ENCODE measurements at regions of chr7 and their contacts with region 1.

Region 1: DNA sequence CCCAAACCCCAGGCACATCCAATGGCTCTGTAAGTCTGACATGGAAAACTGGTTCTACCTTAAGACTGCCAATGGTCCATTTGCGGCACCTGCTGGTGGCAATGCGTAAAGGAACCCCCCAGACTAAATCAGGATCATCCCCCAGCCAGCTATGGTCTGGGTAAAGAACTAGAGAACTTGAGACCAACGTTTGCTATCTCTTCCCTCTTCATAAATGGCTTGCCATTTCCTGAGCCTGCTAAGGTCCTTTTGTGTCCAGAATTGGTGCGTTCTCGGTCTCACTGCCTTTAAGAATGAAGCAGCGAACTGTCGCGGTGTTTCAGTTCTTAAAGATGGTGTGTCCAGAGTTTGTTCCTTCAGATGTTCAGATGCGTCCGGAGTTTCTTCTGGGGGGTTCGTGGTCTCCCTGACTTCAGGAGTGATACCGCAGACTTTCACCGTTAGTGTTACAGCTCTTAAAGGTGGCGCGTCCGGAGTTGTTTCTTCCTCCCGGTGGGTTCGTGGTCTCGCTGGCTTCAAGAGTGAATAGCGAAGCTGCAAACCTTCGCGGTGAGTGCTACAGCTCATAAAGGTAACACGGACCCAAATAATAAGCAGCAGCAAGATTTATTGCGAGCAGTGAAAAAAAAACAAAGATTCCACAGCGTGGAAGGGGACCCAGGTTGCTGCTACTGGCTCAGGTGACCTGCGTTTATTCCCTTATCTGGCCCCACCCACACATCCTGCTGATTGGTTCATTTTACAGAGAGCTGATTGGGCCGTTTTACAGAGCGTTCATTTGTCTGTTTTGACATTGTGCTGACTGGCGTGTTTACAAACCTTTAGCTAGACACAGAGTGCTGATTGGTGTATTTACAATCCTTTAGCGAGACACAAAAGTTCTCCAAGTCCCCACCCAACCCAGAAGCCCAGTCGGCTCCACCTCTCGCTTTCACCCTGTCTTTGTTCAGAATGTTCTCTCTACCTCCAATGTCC is 95.4 kb downstream of the ELMO1 start:
- DNase-seq: peak; percentile 81
- H3K4me3 Mint-ChIP-seq: peak overlapping the region; percentile 91
- H3K27ac Mint-ChIP-seq: peak overlapping the region; percentile 97
- H3K4me1 Mint-ChIP-seq: peaks cover 84% of the 10 kb centered on the region
- H3K27me3 Mint-ChIP-seq: no peaks in the 10 kb centered on the region

Region 2: DNA sequence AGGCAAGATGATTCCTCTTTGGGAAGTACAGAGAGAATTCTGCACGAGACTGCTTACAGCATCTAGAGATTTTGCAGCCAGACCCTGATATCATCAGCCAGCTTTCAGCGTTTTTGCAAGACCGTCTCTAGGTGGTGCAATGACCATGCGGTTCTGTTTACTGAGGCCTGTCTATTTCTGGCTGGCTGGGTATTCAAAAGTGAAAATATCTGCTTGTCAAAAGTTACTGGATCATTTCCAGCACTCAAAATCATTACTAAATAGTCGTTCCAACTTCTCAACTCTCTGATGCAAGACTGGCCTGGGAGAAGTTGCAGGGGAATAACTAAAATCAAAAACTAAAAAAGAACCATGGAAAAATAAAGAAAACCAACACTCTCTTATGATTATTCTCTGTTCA is 144.7 kb before region 1 on chr7:
- CTCF ChIA-PET with region 1: interaction called, 21 read pairs
- DNase-seq: peak; percentile 56
- H3K4me3 Mint-ChIP-seq: no peak overlapping the region
- H3K27ac Mint-ChIP-seq: peak overlapping the region; percentile 55
- H3K4me1 Mint-ChIP-seq: peaks cover 20% of the 10 kb centered on the region
- H3K27me3 Mint-ChIP-seq: no peaks in the 10 kb centered on the region

Region 3: GRCh38 chr7:37234928-37235327 is 118.3 kb before region 1 on chr7:
- CTCF ChIA-PET with region 1: interaction called, 36 read pairs
- DNase-seq: peak; percentile 29
- H3K4me3 Mint-ChIP-seq: no peak overlapping the region
- H3K27ac Mint-ChIP-seq: no peak overlapping the region
- H3K4me1 Mint-ChIP-seq: peaks cover 9% of the 10 kb centered on the region
- H3K27me3 Mint-ChIP-seq: no peaks in the 10 kb centered on the region

Region 4: DNA sequence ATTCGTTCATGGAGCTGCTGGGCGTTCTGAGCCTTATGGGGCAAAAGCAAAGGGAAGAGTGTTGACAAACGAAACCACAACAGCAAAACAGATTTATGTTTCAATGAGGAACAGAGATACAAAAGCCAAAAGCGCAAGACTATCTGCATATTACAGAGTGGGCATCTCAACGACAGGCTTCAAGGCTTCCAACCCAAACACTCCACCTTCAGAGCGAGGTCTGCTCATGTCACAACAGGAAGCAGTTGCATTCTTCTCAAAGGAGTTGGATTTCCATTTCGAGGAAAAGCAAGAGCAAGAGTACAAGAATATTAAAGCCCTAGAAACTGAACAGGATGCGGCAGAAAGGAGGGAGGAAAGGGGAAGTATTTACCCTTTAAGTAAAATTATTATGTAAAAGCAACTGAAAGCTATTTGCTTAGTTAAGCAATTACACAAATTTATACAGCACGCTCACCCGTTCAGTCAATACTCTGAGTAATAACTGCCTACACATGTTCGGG is 93.9 kb before region 1 on chr7:
- CTCF ChIA-PET with region 1: no interaction called
- DNase-seq: no peak
- H3K4me3 Mint-ChIP-seq: peak overlapping the region; percentile 14
- H3K27ac Mint-ChIP-seq: peak overlapping the region; percentile 86
- H3K4me1 Mint-ChIP-seq: peaks cover 39% of the 10 kb centered on the region
- H3K27me3 Mint-ChIP-seq: no peaks in the 10 kb centered on the region

Region 5: DNA sequence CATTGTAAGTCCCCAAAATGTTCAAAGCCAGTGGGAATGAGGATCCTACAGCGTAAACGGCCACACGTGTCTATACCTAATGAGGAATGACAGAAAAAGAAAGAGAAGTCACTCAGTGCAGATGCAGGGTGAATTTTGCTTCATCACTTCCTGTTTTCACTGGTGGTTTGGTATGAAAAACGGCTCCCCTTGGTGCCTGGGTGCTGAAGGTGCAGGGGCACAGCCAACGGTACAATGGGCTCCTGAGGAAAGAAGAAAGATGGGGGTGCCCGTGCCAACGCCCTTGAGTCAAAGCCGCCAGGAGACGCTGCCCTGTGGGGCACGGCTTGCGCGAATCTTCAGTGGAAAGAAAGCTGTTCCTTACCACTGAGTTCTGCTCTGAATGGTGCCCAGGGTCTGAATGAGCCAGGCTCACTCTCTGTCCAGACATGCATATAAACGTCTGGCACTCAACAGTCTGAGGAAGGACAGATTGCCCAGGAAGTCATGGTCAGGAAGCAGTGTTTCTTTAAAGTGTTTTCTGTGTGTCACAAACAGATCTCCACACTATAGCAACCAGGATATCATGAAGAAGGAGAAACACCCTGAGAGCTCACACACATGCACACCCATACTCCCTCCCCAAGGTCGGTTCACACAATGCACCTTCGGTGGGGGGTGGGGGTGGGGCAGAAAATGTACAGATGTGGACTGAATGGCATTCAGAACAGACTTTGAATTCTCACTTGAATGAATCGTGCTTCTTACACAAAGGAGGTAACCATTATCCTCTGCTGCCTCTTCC is 10.4 kb before region 1 on chr7:
- CTCF ChIA-PET with region 1: interaction called, 17 read pairs
- DNase-seq: peak; percentile 82
- H3K4me3 Mint-ChIP-seq: peak overlapping the region; percentile 89
- H3K27ac Mint-ChIP-seq: peak overlapping the region; percentile 96
- H3K4me1 Mint-ChIP-seq: peaks cover 87% of the 10 kb centered on the region
- H3K27me3 Mint-ChIP-seq: no peaks in the 10 kb centered on the region

Region 6: GRCh38 chr7:37371755-37372154 is 18.5 kb after region 1 on chr7:
- CTCF ChIA-PET with region 1: no interaction called
- DNase-seq: no peak
- H3K4me3 Mint-ChIP-seq: no peak overlapping the region
- H3K27ac Mint-ChIP-seq: no peak overlapping the region
- H3K4me1 Mint-ChIP-seq: peaks cover 12% of the 10 kb centered on the region
- H3K27me3 Mint-ChIP-seq: no peaks in the 10 kb centered on the region

Region 7: DNA sequence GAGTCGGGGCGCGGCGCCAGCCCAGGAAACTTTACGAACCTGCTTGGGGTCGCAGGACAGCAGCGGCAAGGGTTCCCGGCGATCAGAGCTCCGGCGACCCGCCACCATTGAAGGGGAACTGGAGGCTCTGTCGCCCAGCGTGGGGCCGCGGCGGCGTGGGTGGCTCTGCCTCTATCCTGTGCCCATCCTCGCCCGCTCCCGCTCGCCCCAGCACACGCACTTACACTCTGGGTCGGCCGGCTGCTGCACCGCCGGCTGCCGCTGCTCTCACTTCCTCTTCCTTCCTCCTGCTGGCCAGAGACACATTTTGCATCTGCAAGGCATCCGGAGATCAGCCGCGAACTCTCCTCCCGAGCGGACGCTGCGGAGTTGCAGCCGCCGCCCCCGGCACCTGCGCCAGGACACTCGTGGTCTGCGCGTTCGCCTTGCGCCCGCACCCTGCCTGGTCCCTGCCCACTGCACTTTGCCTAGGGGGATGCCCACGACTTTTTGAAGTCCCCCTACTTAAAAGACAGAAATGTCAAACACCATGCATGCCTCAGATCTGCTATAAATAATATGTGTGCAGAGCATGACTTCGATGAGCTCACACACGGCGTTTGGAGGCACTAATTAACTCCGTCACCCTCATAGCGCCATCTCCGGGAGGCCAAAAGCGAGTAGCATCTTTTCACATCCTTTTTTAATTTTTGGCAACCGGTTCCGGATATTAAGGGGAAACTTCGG is 95.5 kb after region 1 on chr7 and contains the start of gene ELMO1:
- CTCF ChIA-PET with region 1: interaction called, 58 read pairs
- DNase-seq: peak; percentile 89
- H3K4me3 Mint-ChIP-seq: peak within 1 kb of the TSS; percentile 88
- H3K27ac Mint-ChIP-seq: peak within 1 kb of the TSS; percentile 95
- H3K4me1 Mint-ChIP-seq: peaks cover 63% of the 10 kb centered on the region
- H3K27me3 Mint-ChIP-seq: peaks cover 19% of the 10 kb centered on the region